Common myeloid progenitor, CD34-positive (primary cell): ENCODE measurements at regions of chr1 and their contacts with region 1.

Region 1: DNA sequence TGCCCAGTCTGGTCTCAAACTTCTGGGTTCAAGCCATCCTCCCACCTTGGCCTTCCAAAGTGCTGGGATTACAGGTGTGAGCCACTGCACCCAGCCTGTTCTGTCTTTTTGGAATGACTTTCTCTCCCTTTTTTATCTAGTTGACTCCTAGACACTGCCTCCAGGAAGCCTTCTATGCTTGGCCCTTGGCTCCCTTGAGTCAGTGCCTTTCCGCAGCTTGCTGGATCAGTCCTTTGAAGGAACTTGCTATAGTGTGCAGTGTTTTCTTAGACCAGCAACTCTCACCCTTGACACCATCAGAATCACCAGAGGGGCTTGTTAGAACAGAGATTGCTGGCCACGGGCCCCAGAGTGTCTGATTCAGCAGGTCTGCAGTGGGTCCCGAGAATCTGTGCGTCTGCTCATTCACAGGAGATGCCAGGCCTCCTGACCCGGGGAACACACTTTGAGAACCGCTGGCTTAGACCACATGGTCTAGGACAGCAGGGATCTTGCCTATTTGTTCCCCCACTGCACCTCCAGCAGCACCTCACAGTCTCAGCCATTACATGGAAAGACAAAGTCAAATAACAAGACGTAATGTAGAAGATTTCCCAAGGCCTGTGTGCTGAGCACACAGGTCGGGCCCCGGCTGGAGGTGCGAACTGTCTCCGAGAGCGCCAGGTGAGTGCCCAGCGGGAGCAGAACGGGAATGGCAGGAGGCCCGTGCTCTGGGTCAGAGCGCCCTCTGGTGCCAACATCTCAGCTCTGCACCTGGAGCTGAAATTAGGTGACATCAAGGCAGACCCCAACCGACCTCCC is 27.4 kb upstream of the CTPS1 start:
- DNase-seq: peak; percentile 34 to 49 (median 40)
- H3K4me3 ChIP-seq: peak overlapping the region in 2 of 7 experiments; percentile 11 to 31
- H3K27ac ChIP-seq: no peak overlapping the region
- H3K4me1 ChIP-seq: peaks cover 0 to 9% (median 4%) of the 10 kb centered on the region in 4 experiments
- H3K27me3 ChIP-seq: peaks cover 0 to 42% (median 15%) of the 10 kb centered on the region in 5 experiments

Region 2: GRCh38 chr1:40849801-40850592 is 102.1 kb before region 1 on chr1:
- CTCF ChIA-PET with region 1: interaction called, 140 read pairs
- POLR2A ChIA-PET with region 1: no interaction called
- DNase-seq: peak; percentile 71 to 87 (median 86)
- H3K4me3 ChIP-seq: peak overlapping the region in 2 of 7 experiments; percentile 44 to 59
- H3K27ac ChIP-seq: no peak overlapping the region
- H3K4me1 ChIP-seq: peaks cover 6 to 12% (median 10%) of the 10 kb centered on the region in 4 experiments
- H3K27me3 ChIP-seq: no peaks in the 10 kb centered on the region

Region 3: GRCh38 chr1:40862008-40862863 is 89.9 kb before region 1 on chr1 and contains the start of gene CITED4:
- CTCF ChIA-PET with region 1: interaction called, 140 read pairs
- POLR2A ChIA-PET with region 1: interaction called, 4 read pairs
- DNase-seq: peak; percentile 88 to 95 (median 94)
- H3K4me3 ChIP-seq: peak within 1 kb of the TSS; percentile 30 to 81 (median 67)
- H3K27ac ChIP-seq: peak within 1 kb of the TSS in 1 of 2 experiments; percentile 43
- H3K4me1 ChIP-seq: peaks cover 0 to 24% (median 22%) of the 10 kb centered on the region in 4 experiments
- H3K27me3 ChIP-seq: peaks cover 0 to 37% (median 8%) of the 10 kb centered on the region in 5 experiments

Region 4: GRCh38 chr1:40939320-40940059 is 12.7 kb before region 1 on chr1:
- CTCF ChIA-PET with region 1: interaction called, 61 read pairs
- POLR2A ChIA-PET with region 1: no interaction called
- DNase-seq: no peak
- H3K4me3 ChIP-seq: no peak overlapping the region
- H3K27ac ChIP-seq: no peak overlapping the region
- H3K4me1 ChIP-seq: peaks cover 0 to 3% (median 0%) of the 10 kb centered on the region in 4 experiments
- H3K27me3 ChIP-seq: no peaks in the 10 kb centered on the region

Region 5: GRCh38 chr1:40971966-40972365 is 19.8 kb after region 1 on chr1:
- CTCF ChIA-PET with region 1: interaction called, 10 read pairs
- POLR2A ChIA-PET with region 1: no interaction called
- DNase-seq: peak in 2 of 3 donors; percentile 32 to 37
- H3K4me3 ChIP-seq: no peak overlapping the region
- H3K27ac ChIP-seq: no peak overlapping the region
- H3K4me1 ChIP-seq: peaks cover 0 to 12% (median 1%) of the 10 kb centered on the region in 4 experiments
- H3K27me3 ChIP-seq: no peaks in the 10 kb centered on the region